ENCODE measurements at regions of chr15 and their contacts with region 1.

Region 1: DNA sequence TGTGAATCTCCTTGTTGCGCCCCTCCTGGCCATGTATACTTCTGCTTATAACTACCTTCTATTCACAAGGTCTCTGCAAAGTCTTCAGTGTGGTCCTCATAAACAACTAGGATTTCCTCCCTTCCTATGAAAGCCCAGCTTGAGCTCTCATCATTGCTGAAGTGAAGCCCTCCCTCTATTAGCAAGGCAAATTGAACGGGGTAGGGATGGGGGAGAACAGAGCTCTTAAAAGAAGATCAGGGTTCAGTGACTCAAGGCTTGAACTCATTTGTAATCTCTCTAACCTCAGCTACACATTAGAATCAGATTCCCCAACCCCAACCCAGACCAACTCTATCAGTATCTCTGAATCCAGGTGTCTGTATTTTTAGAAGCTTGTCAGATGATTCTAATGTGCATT is 88.3 kb upstream of the ST8SIA2 start:
- DNase-seq: peak in 2 of 3 donors; percentile 5 to 19
- H3K4me3 ChIP-seq: no peak overlapping the region
- H3K27ac ChIP-seq: no peak overlapping the region
- H3K4me1 ChIP-seq: peaks cover 5 to 30% (median 13%) of the 10 kb centered on the region in 4 experiments
- H3K27me3 ChIP-seq: peaks cover 0 to 2% (median 0%) of the 10 kb centered on the region in 5 experiments

Region 2: DNA sequence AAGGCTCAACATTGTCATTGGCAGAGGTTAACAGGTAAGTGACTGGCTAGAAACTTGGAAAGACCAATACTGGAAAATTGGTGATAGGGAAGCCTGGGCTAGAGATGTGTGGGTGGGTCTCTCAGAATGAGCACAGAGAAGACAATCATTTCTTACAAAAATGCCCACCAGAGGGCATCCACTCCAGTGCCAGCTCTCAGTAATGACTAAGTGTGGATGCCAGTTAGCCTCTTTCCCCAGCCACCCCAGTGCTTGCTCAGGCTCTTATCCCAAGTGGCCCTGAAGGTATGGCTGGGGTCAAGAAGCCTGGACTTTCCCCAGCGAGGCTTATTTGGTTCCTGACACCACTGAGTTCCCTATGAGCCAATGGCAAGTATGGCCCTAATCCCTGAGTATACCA is 27.6 kb before region 1 on chr15:
- CTCF ChIA-PET with region 1: interaction called, 22 read pairs
- POLR2A ChIA-PET with region 1: no interaction called
- DNase-seq: peak; percentile 44 to 68 (median 58)
- H3K4me3 ChIP-seq: no peak overlapping the region
- H3K27ac ChIP-seq: no peak overlapping the region
- H3K4me1 ChIP-seq: no peaks in the 10 kb centered on the region
- H3K27me3 ChIP-seq: no peaks in the 10 kb centered on the region